ENCODE measurements at regions of chr7 and their contacts with region 1.

Region 1: GRCh38 chr7:22110227-22110839 is 164.6 kb upstream of the CDCA7L start:
- DNase-seq: peak; percentile 82
- H3K4me3 Mint-ChIP-seq: no peak overlapping the region
- H3K27ac Mint-ChIP-seq: no peak overlapping the region
- H3K4me1 Mint-ChIP-seq: no peaks in the 10 kb centered on the region
- H3K27me3 Mint-ChIP-seq: peaks cover 2% of the 10 kb centered on the region

Region 2: DNA sequence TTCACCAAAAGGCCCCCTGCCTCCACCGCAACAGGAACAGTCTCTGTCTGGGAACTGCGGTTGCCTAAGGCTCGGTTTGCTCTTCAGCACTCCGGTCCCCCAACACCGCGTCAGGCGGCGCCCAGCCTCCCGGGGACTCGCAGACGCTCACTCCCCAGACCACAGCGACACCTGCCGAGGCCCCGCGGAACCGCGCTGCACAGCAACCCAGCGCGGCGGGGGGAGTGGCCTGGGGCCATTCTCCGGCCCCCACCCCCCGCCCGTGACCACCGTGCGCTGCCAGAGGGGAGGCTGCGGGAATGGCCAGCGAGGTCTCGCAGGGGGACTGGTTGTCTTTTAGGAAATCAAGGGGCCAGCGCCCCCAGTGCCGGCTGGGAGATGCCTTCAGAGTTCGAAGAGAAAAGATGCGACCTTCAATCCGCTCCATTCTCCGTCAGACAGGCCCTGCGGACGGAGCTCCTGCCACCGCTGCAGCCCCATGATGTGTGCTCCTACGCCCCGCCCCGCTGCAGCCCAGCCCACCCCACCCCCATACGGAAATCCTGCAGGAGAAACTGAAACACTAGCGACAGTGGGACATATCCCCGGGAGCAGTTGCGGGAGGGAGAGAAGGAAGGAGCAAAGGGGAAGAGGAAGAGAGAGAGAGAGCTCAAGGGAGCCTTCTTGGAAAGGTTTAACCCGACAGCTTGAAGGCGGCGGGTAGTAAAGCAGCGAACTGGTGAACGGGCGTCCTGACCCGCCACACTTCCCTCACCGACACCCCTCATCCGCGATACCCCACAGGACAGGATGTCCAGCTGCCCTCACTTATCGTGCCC is 27.2 kb before region 1 on chr7:
- CTCF ChIA-PET with region 1: interaction called, 23 read pairs
- intact Hi-C with region 1: no loop called
- DNase-seq: peak; percentile 85
- H3K4me3 Mint-ChIP-seq: peak overlapping the region; percentile 71
- H3K27ac Mint-ChIP-seq: no peak overlapping the region
- H3K4me1 Mint-ChIP-seq: peaks cover 11% of the 10 kb centered on the region
- H3K27me3 Mint-ChIP-seq: peaks cover 20% of the 10 kb centered on the region

Region 3: GRCh38 chr7:22255834-22256233 is 145.5 kb after region 1 on chr7:
- CTCF ChIA-PET with region 1: interaction called, 4 read pairs
- intact Hi-C with region 1: loop called (anchors 10 kb)
- DNase-seq: no peak
- H3K4me3 Mint-ChIP-seq: no peak overlapping the region
- H3K27ac Mint-ChIP-seq: no peak overlapping the region
- H3K4me1 Mint-ChIP-seq: peaks cover 8% of the 10 kb centered on the region
- H3K27me3 Mint-ChIP-seq: peaks cover 9% of the 10 kb centered on the region

Region 4: GRCh38 chr7:22452142-22452959 is 342.0 kb after region 1 on chr7:
- CTCF ChIA-PET with region 1: interaction called, 12 read pairs
- intact Hi-C with region 1: loop called (anchors 1 kb)
- DNase-seq: peak; percentile 70
- H3K4me3 Mint-ChIP-seq: no peak overlapping the region
- H3K27ac Mint-ChIP-seq: no peak overlapping the region
- H3K4me1 Mint-ChIP-seq: peaks cover 5% of the 10 kb centered on the region
- H3K27me3 Mint-ChIP-seq: peaks cover 30% of the 10 kb centered on the region

Region 5: DNA sequence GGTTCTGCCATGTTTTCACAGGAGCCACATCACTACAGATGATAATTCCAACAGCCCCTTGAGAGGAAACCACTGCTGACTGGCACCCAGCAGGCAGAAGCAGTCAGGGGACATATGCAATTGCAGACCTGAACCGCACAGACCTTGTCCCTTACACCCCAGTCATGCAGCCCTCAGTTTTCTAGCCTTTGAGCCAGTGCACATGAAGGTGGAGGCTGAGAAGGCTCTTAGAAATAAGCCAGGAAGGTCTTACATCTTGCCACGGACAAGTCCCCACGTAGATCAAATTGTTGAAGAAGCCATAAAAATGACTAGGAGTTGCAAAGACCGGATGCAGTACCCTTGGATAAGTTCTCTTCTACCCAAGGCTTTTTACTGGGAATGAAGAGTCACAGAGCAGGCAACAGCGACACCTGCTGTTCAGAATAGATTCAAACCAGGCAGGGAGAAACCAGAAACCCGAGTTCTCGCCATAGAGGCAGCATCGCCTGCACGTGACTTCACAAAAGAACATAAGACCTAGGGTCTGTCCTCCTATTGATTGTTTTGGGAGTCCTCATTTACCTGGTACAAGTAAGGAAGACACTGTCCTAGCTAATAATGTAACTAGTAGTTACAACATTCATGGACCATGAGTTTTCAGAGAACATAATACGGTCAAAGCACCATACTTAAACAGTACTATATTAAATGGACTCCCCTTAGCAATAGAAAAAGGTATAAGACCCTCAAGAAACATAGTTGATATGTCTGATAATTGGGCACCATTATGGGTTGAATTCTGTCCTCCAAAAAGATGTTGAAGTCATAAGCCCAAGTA is 378.5 kb after region 1 on chr7:
- CTCF ChIA-PET with region 1: interaction called, 24 read pairs
- intact Hi-C with region 1: loop called (anchors 1 kb)
- DNase-seq: peak; percentile 80
- H3K4me3 Mint-ChIP-seq: no peak overlapping the region
- H3K27ac Mint-ChIP-seq: no peak overlapping the region
- H3K4me1 Mint-ChIP-seq: no peaks in the 10 kb centered on the region
- H3K27me3 Mint-ChIP-seq: no peaks in the 10 kb centered on the region

Measured in activated naive CD4-positive, alpha-beta T cell treated with anti-CD3 and anti-CD28 coated beads for 36 hours (primary cell).